Activated CD4-positive, alpha-beta T cell treated with anti-CD3 and anti-CD28 coated beads for 36 hours (primary cell): ENCODE measurements at regions of chr14 and their contacts with region 1.

Region 1: DNA sequence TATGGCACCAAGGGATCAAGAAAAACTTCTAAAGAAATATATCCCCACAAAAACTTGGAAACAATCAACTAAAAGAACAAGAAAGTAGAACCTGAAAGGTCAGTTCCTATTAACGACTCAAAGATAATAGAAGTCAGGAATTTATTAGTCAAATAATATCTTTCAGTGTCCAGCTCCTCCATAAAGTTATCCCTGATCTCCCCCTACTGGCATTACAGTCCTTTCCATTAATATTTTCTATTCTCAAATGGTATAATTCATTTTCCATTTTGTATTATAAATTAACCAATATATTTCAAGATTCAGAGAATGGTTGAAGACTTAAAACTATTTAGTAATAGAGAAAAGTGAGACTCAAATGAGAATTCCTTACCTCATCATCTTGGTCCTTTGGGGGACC is 11.6 kb upstream of the SUPT16H start:
- DNase-seq: no peak
- ATAC-seq: no peak
- H3K4me3 Mint-ChIP-seq: no peak overlapping the region
- H3K27ac Mint-ChIP-seq: no peak overlapping the region
- H3K4me1 Mint-ChIP-seq: no peaks in the 10 kb centered on the region
- H3K27me3 Mint-ChIP-seq: no peaks in the 10 kb centered on the region

Region 2: DNA sequence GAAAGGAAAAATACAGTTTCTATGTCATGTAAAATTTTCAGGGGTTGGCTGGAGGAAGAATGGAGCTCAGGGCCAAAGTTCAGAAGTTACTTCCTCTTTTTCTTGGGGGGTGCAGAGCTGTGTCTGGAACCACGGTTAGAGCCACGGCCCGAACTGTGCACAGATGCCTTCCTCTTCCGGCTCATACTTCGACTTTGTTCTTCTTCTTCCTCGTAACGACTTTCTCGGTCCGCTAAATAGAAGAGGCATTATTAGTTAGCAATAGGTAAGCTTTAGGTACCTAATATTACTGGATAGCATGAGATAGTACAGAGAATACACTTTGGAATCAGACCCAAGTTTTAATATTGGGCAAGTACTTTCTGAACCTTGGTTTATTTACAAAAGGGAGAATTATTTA is 42.9 kb before region 1 on chr14:
- CTCF ChIA-PET with region 1: no interaction called
- POLR2A ChIA-PET with region 1: no interaction called
- intact Hi-C with region 1: loop called in 1 of 2 experiments (anchors 2 kb)
- DNase-seq: no peak
- ATAC-seq: no peak
- H3K4me3 Mint-ChIP-seq: no peak overlapping the region
- H3K27ac Mint-ChIP-seq: peak overlapping the region; percentile 38
- H3K4me1 Mint-ChIP-seq: no peaks in the 10 kb centered on the region
- H3K27me3 Mint-ChIP-seq: no peaks in the 10 kb centered on the region